PC-3 (cell line): ENCODE measurements at regions of chr4 and their contacts with region 1.

Region 1: GRCh38 chr4:126957556-126957955 is 675.2 kb upstream of the INTU start:
- DNase-seq: no peak
- ATAC-seq: no peak
- H3K4me3 ChIP-seq: no peak overlapping the region
- H3K27ac ChIP-seq: no peak overlapping the region
- H3K4me1 ChIP-seq: no peaks in the 10 kb centered on the region
- H3K27me3 ChIP-seq: no peaks in the 10 kb centered on the region
- CTCF ChIP-seq: no peak; the same call in 1 of the 2 replicates

Region 2: DNA sequence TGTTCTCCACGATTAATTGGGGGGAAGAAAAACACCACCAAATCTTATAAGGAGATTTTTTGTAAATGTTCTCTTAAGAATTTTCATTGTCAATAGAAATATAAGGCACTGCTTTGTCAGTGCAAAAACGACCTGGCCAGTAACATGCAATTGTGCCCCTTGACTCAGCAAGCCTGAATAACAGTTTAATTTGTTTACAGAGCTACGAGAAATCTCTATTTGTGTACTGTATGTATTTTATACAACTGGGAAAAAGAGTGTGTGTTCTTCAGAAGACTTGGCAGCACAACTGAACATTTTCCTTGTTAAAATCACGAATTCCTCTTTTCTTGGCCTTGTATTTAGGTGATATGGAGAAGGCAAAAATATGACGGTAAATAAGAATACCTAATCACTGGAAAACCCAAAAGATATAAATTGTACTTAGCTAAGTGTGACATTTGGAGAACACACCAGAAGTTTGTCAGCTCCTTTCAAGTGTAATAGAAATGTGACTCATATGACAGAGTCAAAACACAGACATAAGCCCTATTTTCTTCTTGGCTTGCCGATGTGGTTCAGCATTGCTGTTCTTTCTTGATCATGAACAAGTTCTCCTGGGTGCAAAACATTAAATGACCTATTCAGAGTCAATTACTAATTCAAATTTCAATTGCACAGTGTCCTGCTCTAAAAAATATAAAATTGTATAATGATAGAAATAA is 269.7 kb before region 1 on chr4:
- CTCF ChIA-PET with region 1: interaction called, 5 read pairs
- POLR2A ChIA-PET with region 1: no interaction called
- intact Hi-C with region 1: loop called (anchors 5 kb)
- DNase-seq: no peak
- ATAC-seq: peak; percentile 83
- H3K4me3 ChIP-seq: no peak overlapping the region
- H3K27ac ChIP-seq: no peak overlapping the region
- H3K4me1 ChIP-seq: no peaks in the 10 kb centered on the region; the same call in 1 of the 2 replicates
- H3K27me3 ChIP-seq: no peaks in the 10 kb centered on the region
- CTCF ChIP-seq: no peak

Region 3: GRCh38 chr4:128285085-128285997 is 1327.8 kb after region 1 on chr4:
- CTCF ChIA-PET with region 1: no interaction called
- POLR2A ChIA-PET with region 1: no interaction called
- intact Hi-C with region 1: no loop called
- DNase-seq: peak; percentile 27
- ATAC-seq: no peak
- H3K4me3 ChIP-seq: peak overlapping the region; percentile 89
- H3K27ac ChIP-seq: 0 out of 2 replicates have a peak overlapping the region, but pooled peaks have one; percentile 6
- H3K4me1 ChIP-seq: peaks cover 24% of the 10 kb centered on the region
- H3K27me3 ChIP-seq: no peaks in the 10 kb centered on the region
- CTCF ChIP-seq: no peak